ENCODE measurements at regions of chr2 and their contacts with region 1.

Region 1: GRCh38 chr2:161556440-161556839 is 67.8 kb upstream of the SLC4A10 start:
- DNase-seq: no peak
- H3K4me3 ChIP-seq: no peak overlapping the region
- H3K4me3 Mint-ChIP-seq: no peak overlapping the region
- H3K27ac Mint-ChIP-seq: no peak overlapping the region
- H3K4me1 ChIP-seq: no peaks in the 10 kb centered on the region
- H3K4me1 Mint-ChIP-seq: no peaks in the 10 kb centered on the region
- H3K27me3 ChIP-seq: 0 out of 2 replicates have a peak, but pooled peaks cover 1% of the 10 kb centered on the region
- H3K27me3 Mint-ChIP-seq: peaks cover 7% of the 10 kb centered on the region
- CTCF ChIP-seq: peak in 1 of 2 experiments; percentile 10

Region 2: DNA sequence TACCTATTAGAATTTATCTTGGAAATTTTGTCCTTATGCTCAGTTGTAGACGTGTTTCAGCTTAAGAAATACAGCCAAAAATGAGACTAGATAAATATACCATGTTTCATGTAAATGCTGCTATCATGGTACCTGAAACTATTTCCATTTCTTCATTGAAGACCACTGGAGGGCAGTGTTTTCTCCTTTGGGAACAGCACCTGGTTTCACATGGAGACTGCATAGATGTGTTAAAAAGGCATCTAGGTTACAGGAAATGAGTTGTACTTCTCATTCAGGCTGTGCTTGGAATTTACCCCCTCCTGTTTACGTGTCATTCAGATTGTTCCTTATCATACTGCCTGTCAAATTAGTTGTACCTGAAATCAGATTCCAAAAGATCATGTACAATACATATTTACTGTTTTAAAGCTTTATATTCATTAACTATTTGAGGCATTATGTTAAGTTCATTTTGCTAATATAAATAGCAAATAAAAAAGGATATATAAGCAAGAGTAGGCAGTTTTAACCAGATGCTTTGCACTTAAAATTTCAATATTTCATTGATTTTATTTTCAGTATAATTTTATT is 305.5 kb before region 1 on chr2:
- CTCF ChIA-PET with region 1: no interaction called
- POLR2A ChIA-PET with region 1: no interaction called
- intact Hi-C with region 1: loop called (anchors 2 kb)
- DNase-seq: peak in 1 of 2 experiments; percentile 68
- H3K4me3 ChIP-seq: no peak overlapping the region
- H3K4me3 Mint-ChIP-seq: no peak overlapping the region
- H3K27ac Mint-ChIP-seq: no peak overlapping the region
- H3K4me1 ChIP-seq: no peaks in the 10 kb centered on the region
- H3K4me1 Mint-ChIP-seq: no peaks in the 10 kb centered on the region
- H3K27me3 ChIP-seq: no peaks in the 10 kb centered on the region
- H3K27me3 Mint-ChIP-seq: no peaks in the 10 kb centered on the region
- CTCF ChIP-seq: peak; percentile 63 to 77

Region 3: DNA sequence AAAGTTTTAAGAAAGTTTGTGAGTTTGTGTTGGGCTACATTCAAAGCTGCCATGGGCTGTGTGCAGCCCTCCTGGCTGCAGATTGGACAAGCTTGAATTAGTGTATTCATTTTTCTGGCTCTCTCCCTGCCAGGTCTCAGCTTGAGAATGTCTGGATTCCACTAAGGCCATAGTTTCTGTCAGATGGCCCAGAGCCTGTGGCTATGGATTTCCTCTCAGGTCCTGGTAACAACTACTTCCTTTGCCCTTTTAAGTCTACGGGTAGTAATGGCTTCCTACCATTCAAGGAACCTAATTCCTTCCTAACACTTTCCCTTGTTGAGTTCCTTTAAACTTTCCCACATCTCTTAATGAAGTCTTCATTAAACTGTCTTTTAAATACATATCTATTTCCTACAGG is 272.5 kb before region 1 on chr2:
- CTCF ChIA-PET with region 1: no interaction called
- POLR2A ChIA-PET with region 1: no interaction called
- intact Hi-C with region 1: loop called (anchors 2 kb)
- DNase-seq: no peak
- H3K4me3 ChIP-seq: no peak overlapping the region
- H3K4me3 Mint-ChIP-seq: no peak overlapping the region
- H3K27ac Mint-ChIP-seq: no peak overlapping the region
- H3K4me1 ChIP-seq: no peaks in the 10 kb centered on the region
- H3K4me1 Mint-ChIP-seq: no peaks in the 10 kb centered on the region
- H3K27me3 ChIP-seq: no peaks in the 10 kb centered on the region
- H3K27me3 Mint-ChIP-seq: peaks cover 3% of the 10 kb centered on the region
- CTCF ChIP-seq: no peak

Region 4: GRCh38 chr2:161586517-161587167 is 30.2 kb after region 1 on chr2:
- CTCF ChIA-PET with region 1: no interaction called
- POLR2A ChIA-PET with region 1: no interaction called
- intact Hi-C with region 1: no loop called
- DNase-seq: no peak
- H3K4me3 ChIP-seq: no peak overlapping the region
- H3K4me3 Mint-ChIP-seq: no peak overlapping the region
- H3K27ac Mint-ChIP-seq: no peak overlapping the region
- H3K4me1 ChIP-seq: no peaks in the 10 kb centered on the region
- H3K4me1 Mint-ChIP-seq: no peaks in the 10 kb centered on the region
- H3K27me3 ChIP-seq: no peaks in the 10 kb centered on the region
- H3K27me3 Mint-ChIP-seq: peaks cover 7% of the 10 kb centered on the region
- CTCF ChIP-seq: peak; percentile 54 to 66

Measured in Caco-2 (cell line).